CD4-positive, alpha-beta memory T cell (primary cell): ENCODE measurements at regions of chr12 and their contacts with region 1.

Region 1: DNA sequence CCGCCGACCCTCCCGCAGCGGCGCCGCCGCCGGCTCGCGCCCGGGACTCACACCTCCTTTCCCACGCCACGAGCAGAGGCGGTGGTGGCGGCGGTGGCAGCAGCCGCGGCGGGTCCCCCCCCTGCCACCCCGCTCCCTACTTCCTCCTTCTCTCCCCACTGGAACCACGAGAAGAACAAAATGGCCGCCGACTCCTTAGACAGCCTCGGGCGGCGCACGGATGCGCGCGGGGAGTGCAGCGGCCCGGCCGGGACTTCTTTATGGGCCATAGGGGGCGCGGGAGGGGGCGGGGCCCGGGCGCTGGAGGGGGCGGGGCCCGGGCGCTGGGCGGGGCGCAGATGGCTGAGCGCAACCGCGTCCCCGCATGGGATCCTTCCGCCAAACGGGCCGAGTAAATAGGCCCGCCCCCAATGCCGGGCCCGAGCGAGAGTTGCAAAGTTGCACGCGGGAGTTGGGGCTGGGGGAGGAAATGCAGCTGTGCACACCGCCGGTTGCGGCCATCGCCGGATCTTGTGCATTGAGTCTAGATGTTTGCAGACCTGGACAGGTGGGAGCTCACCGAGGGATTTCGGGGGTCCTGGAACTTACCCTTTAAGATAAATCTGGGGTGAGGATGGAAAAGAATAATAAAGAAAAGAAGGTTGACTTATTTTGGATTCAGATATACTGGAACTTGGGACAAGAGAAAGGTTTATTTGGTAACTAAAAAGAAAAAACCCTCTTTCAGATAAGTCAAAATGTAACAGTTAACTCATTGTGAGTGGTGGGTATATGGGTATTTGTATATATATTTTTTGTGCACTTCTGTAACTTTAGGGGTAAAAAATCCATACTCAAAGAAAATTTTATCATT is at the start of gene PPP1CC:
- DNase-seq: peak; percentile 91 to 95 (median 92)
- H3K4me3 ChIP-seq: peak within 1 kb of the TSS; percentile 66 to 69
- H3K4me3 Mint-ChIP-seq: peak within 1 kb of the TSS; percentile 96 to 100 (median 100)
- H3K27ac ChIP-seq: peak within 1 kb of the TSS; percentile 59
- H3K27ac Mint-ChIP-seq: peak within 1 kb of the TSS; percentile 96 to 99 (median 98)
- H3K4me1 ChIP-seq: peaks cover 32% of the 10 kb centered on the region
- H3K4me1 Mint-ChIP-seq: peaks cover 26 to 65% (median 41%) of the 10 kb centered on the region in 4 donors
- H3K27me3 ChIP-seq: no peaks in the 10 kb centered on the region
- H3K27me3 Mint-ChIP-seq: no peaks in the 10 kb centered on the region
- total RNA-seq, gene PPP1CC: 147 to 168 TPM

Region 2: DNA sequence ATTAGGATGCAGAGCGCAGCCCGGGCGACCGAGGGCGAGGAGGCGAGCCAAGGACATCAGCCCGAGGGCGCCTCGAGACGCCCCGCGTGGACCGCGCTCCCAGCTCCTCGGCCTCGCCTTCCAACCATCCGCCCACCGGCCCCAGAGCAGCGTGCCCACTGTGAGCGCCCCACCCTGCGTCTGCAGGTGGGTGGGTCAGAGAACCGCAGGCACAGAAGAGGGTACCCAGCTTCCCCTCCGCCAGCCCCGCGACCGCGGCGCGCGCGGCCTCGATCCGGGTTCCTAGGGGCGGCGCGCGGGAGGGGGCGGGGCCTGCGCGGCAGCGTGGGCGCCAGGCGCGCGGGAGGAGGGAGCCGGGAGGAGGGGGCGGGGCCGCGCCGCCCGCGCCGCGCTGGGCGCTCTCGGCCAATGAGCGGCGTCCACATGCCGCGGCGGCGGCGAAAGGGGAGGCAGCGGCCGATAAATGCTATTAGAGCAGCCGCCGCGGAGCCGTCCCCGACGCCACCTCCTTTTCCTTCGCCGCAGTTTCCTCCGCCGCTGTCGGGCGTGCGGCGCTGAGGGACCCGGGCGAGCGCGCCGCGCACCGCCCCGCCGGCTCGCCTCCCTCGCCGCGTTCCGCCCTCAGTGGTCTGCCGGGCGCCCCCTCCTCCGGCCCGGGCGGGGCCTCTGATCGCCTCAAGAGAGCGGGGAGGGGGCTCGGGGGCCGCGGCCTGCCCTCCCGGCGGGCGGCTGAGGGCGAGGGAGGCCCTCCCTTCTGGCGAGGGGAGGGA is 462.0 kb before region 1 on chr12 and contains the start of gene ATP2A2:
- CTCF ChIA-PET with region 1: no interaction called
- POLR2A ChIA-PET with region 1: interaction called, 3 read pairs
- intact Hi-C with region 1: loop called (anchors 5 kb)
- DNase-seq: peak; percentile 89 to 93 (median 92)
- H3K4me3 ChIP-seq: peak within 1 kb of the TSS; percentile 87 to 88
- H3K4me3 Mint-ChIP-seq: peak within 1 kb of the TSS; percentile 91 to 98 (median 94)
- H3K27ac ChIP-seq: peak within 1 kb of the TSS; percentile 85
- H3K27ac Mint-ChIP-seq: peak within 1 kb of the TSS; percentile 90 to 98 (median 94)
- H3K4me1 ChIP-seq: peaks cover 47% of the 10 kb centered on the region
- H3K4me1 Mint-ChIP-seq: peaks cover 36 to 53% (median 43%) of the 10 kb centered on the region in 4 donors
- H3K27me3 ChIP-seq: no peaks in the 10 kb centered on the region
- H3K27me3 Mint-ChIP-seq: no peaks in the 10 kb centered on the region
- total RNA-seq, gene ATP2A2: 90.4 to 91.0 TPM

Region 3: GRCh38 chr12:110468212-110469048 is 274.5 kb before region 1 on chr12 and contains the starts of genes FAM216A and GPN3:
- CTCF ChIA-PET with region 1: no interaction called
- POLR2A ChIA-PET with region 1: interaction called, 10 read pairs
- intact Hi-C with region 1: loop called (anchors 1 kb)
- DNase-seq: peak; percentile 97 to 98 (median 98)
- H3K4me3 ChIP-seq: peak within 1 kb of the TSS; percentile 93 to 97
- H3K4me3 Mint-ChIP-seq: peak within 1 kb of the TSS; percentile 96 to 100 (median 98)
- H3K27ac ChIP-seq: peak within 1 kb of the TSS; percentile 75
- H3K27ac Mint-ChIP-seq: peak within 1 kb of the TSS; percentile 91 to 98 (median 96)
- H3K4me1 ChIP-seq: peaks cover 25% of the 10 kb centered on the region
- H3K4me1 Mint-ChIP-seq: peaks cover 17 to 45% (median 34%) of the 10 kb centered on the region in 4 donors
- H3K27me3 ChIP-seq: no peaks in the 10 kb centered on the region
- H3K27me3 Mint-ChIP-seq: no peaks in the 10 kb centered on the region
- total RNA-seq, gene FAM216A: 16.4 to 16.9 TPM
- total RNA-seq, gene GPN3: 12.5 to 16.6 TPM

Region 4: DNA sequence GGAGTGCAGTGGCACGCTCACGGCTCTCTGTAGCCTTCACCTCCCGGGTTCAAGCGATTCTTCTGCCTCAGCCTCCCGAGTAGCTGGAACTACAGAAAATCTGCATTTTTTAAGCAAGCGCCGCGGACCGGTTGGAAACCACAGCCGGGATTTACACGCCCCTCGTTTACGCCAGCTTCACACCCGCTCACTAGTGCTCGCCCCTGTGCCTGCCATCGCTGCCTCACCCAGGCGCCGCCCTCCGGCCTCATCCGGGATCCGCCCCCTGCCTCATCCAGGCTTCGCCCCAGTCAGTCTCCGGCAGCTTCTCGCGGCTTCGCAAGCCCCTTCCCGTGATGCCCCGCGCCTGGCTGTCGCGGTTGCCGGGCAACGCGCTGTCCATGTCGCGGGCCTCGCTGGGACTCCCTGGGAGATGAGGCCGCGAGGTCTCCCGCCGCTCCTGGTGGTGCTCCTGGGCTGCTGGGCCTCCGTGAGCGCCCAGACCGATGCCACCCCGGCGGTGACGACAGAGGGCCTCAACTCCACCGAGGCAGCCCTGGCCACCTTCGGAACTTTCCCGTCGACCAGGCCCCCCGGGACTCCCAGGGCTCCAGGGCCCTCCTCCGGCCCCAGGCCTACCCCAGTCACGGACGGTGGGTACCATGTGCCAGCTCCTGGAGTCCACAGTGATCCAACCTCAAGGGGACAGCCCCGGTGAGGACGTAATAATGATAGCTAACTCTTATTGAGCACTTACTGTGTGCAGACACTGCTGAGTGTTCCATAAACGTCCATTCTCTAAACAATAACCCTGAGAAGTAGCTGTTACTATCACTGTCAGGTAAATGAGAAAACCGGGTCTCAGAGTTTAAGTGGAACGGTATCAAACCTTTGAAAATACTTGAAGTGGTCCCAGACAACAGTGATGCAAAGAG is 128.9 kb before region 1 on chr12 and contains the start of gene TCTN1:
- CTCF ChIA-PET with region 1: no interaction called
- POLR2A ChIA-PET with region 1: interaction called, 9 read pairs
- intact Hi-C with region 1: loop called (anchors 2 kb)
- DNase-seq: peak; percentile 93 to 96 (median 94)
- H3K4me3 ChIP-seq: peak within 1 kb of the TSS; percentile 53 to 86
- H3K4me3 Mint-ChIP-seq: peak within 1 kb of the TSS; percentile 86 to 90 (median 88)
- H3K27ac ChIP-seq: peak within 1 kb of the TSS; percentile 72
- H3K27ac Mint-ChIP-seq: peak within 1 kb of the TSS; percentile 65 to 94 (median 88)
- H3K4me1 ChIP-seq: peaks cover 8% of the 10 kb centered on the region
- H3K4me1 Mint-ChIP-seq: peaks cover 4 to 9% (median 6%) of the 10 kb centered on the region in 4 donors
- H3K27me3 ChIP-seq: no peaks in the 10 kb centered on the region
- H3K27me3 Mint-ChIP-seq: no peaks in the 10 kb centered on the region
- total RNA-seq, gene TCTN1: 5.8 to 7.7 TPM

Region 5: GRCh38 chr12:110776410-110776809 is 33.5 kb after region 1 on chr12:
- CTCF ChIA-PET with region 1: interaction called, 5 read pairs
- POLR2A ChIA-PET with region 1: interaction called, 13 read pairs
- intact Hi-C with region 1: loop called (anchors 2 kb)
- DNase-seq: peak in 1 of 5 donors; percentile 18
- H3K4me3 ChIP-seq: no peak overlapping the region
- H3K4me3 Mint-ChIP-seq: peak overlapping the region in 6 of 8 donors; percentile 22 to 70 (median 36)
- H3K27ac ChIP-seq: no peak overlapping the region
- H3K27ac Mint-ChIP-seq: peak overlapping the region; percentile 6 to 63 (median 49)
- H3K4me1 ChIP-seq: peaks cover 63% of the 10 kb centered on the region
- H3K4me1 Mint-ChIP-seq: peaks cover 38 to 69% (median 52%) of the 10 kb centered on the region in 4 donors
- H3K27me3 ChIP-seq: no peaks in the 10 kb centered on the region
- H3K27me3 Mint-ChIP-seq: no peaks in the 10 kb centered on the region

Region 6: GRCh38 chr12:110794623-110795280 is 51.8 kb after region 1 on chr12:
- CTCF ChIA-PET with region 1: no interaction called
- POLR2A ChIA-PET with region 1: no interaction called
- intact Hi-C with region 1: no loop called
- DNase-seq: no peak
- H3K4me3 ChIP-seq: no peak overlapping the region
- H3K4me3 Mint-ChIP-seq: no peak overlapping the region
- H3K27ac ChIP-seq: no peak overlapping the region
- H3K27ac Mint-ChIP-seq: peak overlapping the region in 2 of 7 donors; percentile 17 to 32
- H3K4me1 ChIP-seq: no peaks in the 10 kb centered on the region
- H3K4me1 Mint-ChIP-seq: peaks cover 0 to 2% (median 0%) of the 10 kb centered on the region in 4 donors
- H3K27me3 ChIP-seq: no peaks in the 10 kb centered on the region
- H3K27me3 Mint-ChIP-seq: no peaks in the 10 kb centered on the region